Caco-2 (cell line): ENCODE measurements at regions of chr17 and their contacts with region 1.

Region 1: DNA sequence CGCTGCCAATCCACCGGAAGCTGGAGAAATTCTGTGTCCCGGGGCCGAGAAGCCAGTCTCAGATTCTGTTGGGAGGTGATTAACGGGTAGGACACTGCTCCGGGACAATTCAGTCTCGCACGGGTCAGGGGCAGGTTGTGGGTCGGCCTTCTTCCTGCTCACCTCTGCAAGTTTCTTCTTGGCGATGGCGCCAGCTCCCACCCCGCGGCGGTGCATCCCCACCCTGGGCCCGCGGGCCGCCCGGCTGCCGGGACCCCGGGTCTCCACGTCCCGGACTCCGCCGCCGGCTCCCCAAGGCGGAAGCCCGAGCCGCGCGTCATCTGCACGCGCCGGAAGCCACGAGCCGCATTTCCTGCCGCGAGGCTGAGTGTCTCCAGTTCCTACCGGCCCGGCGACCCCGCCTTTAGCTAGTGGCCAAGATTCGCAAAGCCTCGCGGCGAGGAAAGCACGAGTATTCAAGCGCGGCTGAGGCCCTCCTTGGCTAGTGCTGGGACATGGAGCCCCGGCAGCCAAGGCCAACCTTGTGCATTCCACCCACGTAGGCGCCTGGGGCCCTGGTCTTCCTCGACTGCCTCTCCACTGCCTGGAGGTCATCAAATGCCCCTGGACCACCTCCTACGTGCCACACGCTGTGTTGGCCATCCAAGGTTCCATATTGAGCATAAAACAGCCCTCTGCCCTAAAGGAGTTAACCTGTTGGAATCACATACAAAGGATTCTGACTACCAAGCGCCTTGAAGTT is at the start of gene SNF8:
- DNase-seq: peak; percentile 99 to 100
- H3K4me3 ChIP-seq: peak within 1 kb of the TSS; percentile 85
- H3K4me3 Mint-ChIP-seq: peak within 1 kb of the TSS; percentile 95
- H3K27ac Mint-ChIP-seq: peak within 1 kb of the TSS; percentile 95
- H3K4me1 ChIP-seq: peaks cover 9% of the 10 kb centered on the region
- H3K4me1 Mint-ChIP-seq: no peaks in the 10 kb centered on the region
- H3K27me3 ChIP-seq: no peaks in the 10 kb centered on the region
- H3K27me3 Mint-ChIP-seq: no peaks in the 10 kb centered on the region
- CTCF ChIP-seq: no peak
- total RNA-seq, gene SNF8: 457 and 461 TPM in 2 replicates

Region 2: DNA sequence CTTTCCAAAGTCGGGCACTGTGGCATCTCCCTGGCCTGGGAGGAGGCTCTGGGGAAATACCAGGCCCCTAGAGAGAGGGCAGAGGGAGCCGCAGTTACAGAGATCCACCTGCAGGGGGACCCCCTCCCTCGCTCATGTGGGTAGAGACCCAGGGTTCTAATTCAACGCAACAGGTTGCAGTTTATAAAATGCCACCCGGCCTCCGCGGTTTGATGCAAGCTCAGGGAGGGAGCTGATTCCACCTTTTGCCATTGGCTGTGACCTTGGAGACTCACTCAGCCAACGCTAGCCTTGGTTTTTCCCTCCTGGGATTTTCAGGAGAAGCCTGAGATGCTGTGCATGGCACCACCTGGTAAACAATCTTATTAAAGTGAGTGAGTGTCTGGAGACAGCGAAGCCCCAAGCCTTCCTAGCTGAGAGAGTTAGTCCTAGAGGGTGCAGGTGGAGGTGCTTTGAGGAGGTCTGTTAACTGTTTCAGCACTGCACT is 139.7 kb before region 1 on chr17:
- CTCF ChIA-PET with region 1: interaction called, 12 read pairs
- POLR2A ChIA-PET with region 1: no interaction called
- intact Hi-C with region 1: no loop called
- DNase-seq: peak; percentile 86 to 95
- H3K4me3 ChIP-seq: no peak overlapping the region
- H3K4me3 Mint-ChIP-seq: no peak overlapping the region
- H3K27ac Mint-ChIP-seq: no peak overlapping the region
- H3K4me1 ChIP-seq: peaks cover 15% of the 10 kb centered on the region
- H3K4me1 Mint-ChIP-seq: peaks cover 17% of the 10 kb centered on the region
- H3K27me3 ChIP-seq: no peaks in the 10 kb centered on the region
- H3K27me3 Mint-ChIP-seq: no peaks in the 10 kb centered on the region
- CTCF ChIP-seq: peak; percentile 100

Region 3: GRCh38 chr17:48901241-48901640 is 43.4 kb before region 1 on chr17:
- CTCF ChIA-PET with region 1: interaction called, 10 read pairs
- POLR2A ChIA-PET with region 1: interaction called, 10 read pairs
- intact Hi-C with region 1: no loop called
- DNase-seq: no peak
- H3K4me3 ChIP-seq: no peak overlapping the region
- H3K4me3 Mint-ChIP-seq: no peak overlapping the region
- H3K27ac Mint-ChIP-seq: no peak overlapping the region
- H3K4me1 ChIP-seq: peaks cover 3% of the 10 kb centered on the region
- H3K4me1 Mint-ChIP-seq: peaks cover 13% of the 10 kb centered on the region
- H3K27me3 ChIP-seq: no peaks in the 10 kb centered on the region
- H3K27me3 Mint-ChIP-seq: no peaks in the 10 kb centered on the region
- CTCF ChIP-seq: no peak

Region 4: DNA sequence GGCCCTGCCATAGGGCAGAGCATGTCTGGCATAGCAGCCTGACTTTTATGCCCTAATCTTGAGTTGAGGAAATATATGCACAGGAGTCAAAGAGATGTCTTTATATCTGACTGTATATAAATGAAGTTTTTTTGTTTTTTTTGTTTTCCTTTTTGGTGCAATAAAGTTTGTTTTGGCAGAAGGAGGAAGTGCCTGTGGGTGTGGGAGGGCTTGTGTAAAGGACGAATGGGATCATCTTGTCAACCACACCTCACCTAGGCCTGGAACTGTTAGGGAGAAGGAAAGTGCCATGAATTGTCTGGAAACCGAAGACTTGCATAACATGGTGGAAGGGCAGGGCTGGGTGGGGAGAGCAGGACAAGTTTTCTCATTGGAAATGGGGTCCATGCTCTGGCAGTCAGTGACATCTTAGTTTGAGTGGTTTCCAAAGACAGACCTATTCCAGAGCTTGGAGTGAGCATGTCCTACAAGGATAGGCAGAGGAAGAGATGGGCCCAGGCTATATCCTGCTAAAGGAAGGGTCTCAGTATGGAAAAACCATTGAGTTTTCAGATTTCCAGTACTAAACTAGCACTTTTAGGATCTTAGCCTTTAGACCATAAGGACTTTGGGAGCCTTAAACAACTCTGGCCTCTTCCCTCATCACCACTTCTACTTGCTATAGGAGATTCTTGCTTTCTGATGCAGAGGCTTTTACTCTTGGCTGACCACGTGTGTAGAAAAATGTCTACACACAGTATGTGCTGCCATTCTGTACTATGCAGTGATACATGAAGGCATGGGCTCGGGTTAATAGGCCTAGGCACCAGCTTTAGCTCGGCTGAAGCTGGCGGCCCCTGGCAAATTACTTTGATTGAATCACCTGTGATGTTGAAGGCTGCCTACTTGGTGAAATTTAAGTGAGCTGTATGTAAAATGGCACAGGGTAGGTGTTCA is 15.5 kb before region 1 on chr17:
- CTCF ChIA-PET with region 1: no interaction called
- POLR2A ChIA-PET with region 1: interaction called, 14 read pairs
- intact Hi-C with region 1: no loop called
- DNase-seq: no peak
- H3K4me3 ChIP-seq: no peak overlapping the region
- H3K4me3 Mint-ChIP-seq: no peak overlapping the region
- H3K27ac Mint-ChIP-seq: no peak overlapping the region
- H3K4me1 ChIP-seq: no peaks in the 10 kb centered on the region
- H3K4me1 Mint-ChIP-seq: no peaks in the 10 kb centered on the region
- H3K27me3 ChIP-seq: no peaks in the 10 kb centered on the region
- H3K27me3 Mint-ChIP-seq: no peaks in the 10 kb centered on the region
- CTCF ChIP-seq: no peak

Region 5: DNA sequence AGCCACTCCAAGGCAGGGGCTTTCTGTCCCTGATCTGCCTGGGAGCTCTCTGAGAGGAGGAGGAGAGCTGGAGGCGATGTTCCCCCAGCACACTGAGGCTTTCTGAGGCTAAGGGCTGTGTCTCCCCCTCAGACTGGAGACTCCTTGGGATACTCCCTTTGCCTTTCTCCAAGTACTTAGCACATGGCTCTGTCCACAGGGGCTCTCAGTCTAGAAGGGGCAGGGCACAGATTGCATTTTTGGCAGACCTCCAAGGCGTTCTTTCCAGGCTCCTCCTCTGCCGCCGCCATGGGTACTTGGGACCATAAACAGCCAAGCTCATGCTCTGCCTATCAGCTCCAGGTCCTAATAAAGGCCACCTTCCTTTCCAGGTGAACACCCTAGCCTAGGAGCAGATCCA is 25.5 kb after region 1 on chr17:
- CTCF ChIA-PET with region 1: no interaction called
- POLR2A ChIA-PET with region 1: interaction called, 17 read pairs
- intact Hi-C with region 1: loop called (anchors 1 kb)
- DNase-seq: peak in 1 of 2 experiments; percentile 43
- H3K4me3 ChIP-seq: no peak overlapping the region
- H3K4me3 Mint-ChIP-seq: no peak overlapping the region
- H3K27ac Mint-ChIP-seq: peak overlapping the region; percentile 97
- H3K4me1 ChIP-seq: peaks cover 38% of the 10 kb centered on the region
- H3K4me1 Mint-ChIP-seq: peaks cover 46% of the 10 kb centered on the region
- H3K27me3 ChIP-seq: no peaks in the 10 kb centered on the region
- H3K27me3 Mint-ChIP-seq: no peaks in the 10 kb centered on the region
- CTCF ChIP-seq: no peak

Region 6: DNA sequence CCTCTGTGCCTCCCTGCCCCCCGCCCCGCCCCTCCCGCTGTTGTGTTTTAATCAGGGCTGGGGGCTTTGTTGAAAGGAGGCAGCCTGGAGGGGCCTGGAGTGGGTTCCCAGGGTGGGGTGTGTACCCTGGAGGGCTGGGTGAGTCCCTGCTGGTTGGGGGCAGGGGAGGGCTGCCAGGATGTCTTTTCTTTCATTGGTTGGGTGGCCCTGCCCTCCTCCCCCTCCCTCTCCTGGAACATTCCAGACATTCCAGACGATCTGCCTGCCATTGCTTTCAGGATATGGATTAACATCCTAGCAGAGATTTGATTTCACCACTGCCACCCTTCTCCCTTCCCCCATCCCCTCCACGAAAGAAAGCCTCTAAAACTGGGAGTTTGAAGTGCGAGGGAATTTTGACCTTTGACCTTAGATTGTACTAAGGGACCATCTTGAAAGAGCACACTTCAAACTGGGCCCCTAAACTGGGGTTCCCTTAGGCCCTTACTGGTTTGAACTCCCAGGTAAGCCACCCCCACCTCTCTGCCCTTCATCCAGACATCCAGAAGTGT is 77.8 kb after region 1 on chr17:
- CTCF ChIA-PET with region 1: no interaction called
- POLR2A ChIA-PET with region 1: interaction called, 7 read pairs
- intact Hi-C with region 1: loop called (anchors 2 kb)
- DNase-seq: peak; percentile 98 to 99
- H3K4me3 ChIP-seq: no peak overlapping the region
- H3K4me3 Mint-ChIP-seq: peak overlapping the region; percentile 44
- H3K27ac Mint-ChIP-seq: peak overlapping the region; percentile 87
- H3K4me1 ChIP-seq: peaks cover 83% of the 10 kb centered on the region
- H3K4me1 Mint-ChIP-seq: peaks cover 86% of the 10 kb centered on the region
- H3K27me3 ChIP-seq: no peaks in the 10 kb centered on the region
- H3K27me3 Mint-ChIP-seq: no peaks in the 10 kb centered on the region
- CTCF ChIP-seq: no peak